Lower leg skin (tissue), 4 donors: ENCODE measurements at regions of chr5 and their contacts with region 1.

Region 1: DNA sequence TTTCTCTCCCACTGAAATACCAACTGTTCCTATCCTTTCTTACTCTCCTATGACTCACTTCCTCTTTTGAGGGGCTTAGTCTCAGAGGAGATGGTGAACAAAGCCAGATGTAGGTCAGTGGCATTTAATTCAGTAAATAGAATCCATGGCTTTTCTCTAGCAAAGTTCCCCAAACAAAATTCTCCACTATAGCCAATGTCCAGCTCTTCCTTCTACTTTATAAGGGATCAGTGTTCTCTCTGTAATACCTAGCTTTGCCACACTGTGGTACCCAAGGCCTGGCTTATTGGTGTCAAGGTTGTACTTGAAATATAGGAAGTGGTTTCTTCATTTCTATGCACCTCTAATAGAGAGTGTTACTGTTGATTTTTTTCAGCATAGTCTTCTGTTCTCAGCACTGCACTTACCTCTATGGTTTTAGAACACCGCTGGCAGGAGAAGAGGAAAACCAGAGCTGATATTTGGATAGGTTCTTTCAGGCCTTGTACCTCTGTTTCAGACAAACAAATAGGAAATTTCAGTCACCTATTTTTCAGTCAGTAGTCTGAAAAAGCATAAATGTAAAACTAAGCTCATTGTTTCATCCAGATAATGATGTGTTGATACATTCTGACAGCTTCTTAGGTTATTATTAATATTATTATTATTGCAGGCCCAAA is 40.6 kb upstream of the ITGA2 start:
- DNase-seq: peak in 1 of 2 donors; percentile 69
- H3K4me3 ChIP-seq: no peak overlapping the region
- CTCF ChIP-seq: peak in 1 of 3 donors; percentile 72
- POLR2A ChIP-seq: no peak

Region 2: GRCh38 chr5:53095931-53096525 is 147.5 kb after region 1 on chr5:
- intact Hi-C with region 1: loop called (anchors 5 kb)
- DNase-seq: peak; percentile 75 to 89
- H3K4me3 ChIP-seq: no peak overlapping the region
- CTCF ChIP-seq: peak in 1 of 3 donors; percentile 48
- POLR2A ChIP-seq: no peak